ENCODE measurements at regions of chr14 and their contacts with region 1.

Region 1: DNA sequence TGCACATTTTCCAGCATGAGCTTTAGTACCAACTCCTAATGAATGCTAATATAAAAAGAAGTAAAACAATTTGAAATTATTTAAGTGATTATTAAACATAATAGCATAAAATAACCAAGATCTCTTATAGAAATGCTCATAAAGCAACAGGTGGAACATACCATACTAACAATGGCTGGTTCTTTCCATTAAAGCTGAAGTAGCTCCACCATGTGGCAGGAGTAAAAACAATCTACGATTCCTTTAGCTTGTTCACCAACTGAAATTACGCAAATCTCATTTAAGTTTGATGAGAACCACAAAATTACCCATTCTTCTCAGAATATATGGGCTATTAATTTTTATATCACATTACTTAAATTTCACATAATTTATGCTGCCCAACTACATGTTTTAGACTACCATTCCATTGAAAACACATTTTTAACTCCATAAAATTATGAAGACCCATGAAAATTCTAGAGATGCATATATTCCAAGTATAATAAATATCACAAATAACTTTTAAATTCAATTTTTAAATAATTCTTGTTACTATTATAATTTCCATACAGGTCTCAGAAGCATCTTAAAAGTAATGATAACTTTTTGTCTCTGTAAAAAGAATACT is 213.6 kb downstream of the DAD1 start:
- DNase-seq: no peak
- ATAC-seq: no peak
- H3K4me3 ChIP-seq: no peak overlapping the region
- H3K27ac ChIP-seq: no peak overlapping the region
- H3K4me1 ChIP-seq: no peaks in the 10 kb centered on the region
- H3K27me3 ChIP-seq: no peaks in the 10 kb centered on the region
- CTCF ChIP-seq: peak in 4 of 5 experiments; percentile 32 to 47 (median 40)
- POLR2A ChIP-seq: no peak

Region 2: GRCh38 chr14:21894003-21894897 is 481.2 kb before region 1 on chr14:
- in situ Hi-C with region 1: no loop called
- intact Hi-C with region 1: no loop called
- DNase-seq: no peak
- ATAC-seq: no peak
- H3K4me3 ChIP-seq: no peak overlapping the region
- H3K27ac ChIP-seq: no peak overlapping the region
- H3K4me1 ChIP-seq: no peaks in the 10 kb centered on the region
- H3K27me3 ChIP-seq: no peaks in the 10 kb centered on the region
- CTCF ChIP-seq: no peak
- POLR2A ChIP-seq: no peak

Region 3: DNA sequence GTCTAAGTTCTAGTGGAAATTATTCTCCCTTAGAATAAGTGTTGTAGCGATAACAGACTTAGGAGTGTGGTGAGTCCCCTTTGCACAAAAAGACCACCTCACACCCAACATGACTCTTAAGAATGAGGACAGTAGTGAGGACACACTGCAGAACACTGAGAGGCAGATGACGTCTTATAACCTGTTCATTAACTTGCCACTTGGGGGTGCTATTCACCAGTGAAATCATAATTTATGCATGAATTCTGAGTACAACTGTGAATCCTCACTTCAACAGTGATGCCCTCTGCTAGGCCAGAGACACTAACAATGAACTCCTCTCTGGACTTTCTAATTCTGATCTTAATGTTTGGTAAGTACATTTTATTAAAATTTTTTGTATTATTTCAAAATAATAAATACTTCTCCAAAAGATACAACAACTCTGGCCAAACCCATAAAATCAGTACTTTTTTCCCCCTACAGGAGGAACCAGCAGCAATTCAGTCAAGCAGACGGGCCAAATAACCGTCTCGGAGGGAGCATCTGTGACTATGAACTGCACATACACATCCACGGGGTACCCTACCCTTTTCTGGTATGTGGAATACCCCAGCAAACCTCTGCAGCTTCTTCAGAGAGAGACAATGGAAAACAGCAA is 61.1 kb before region 1 on chr14:
- in situ Hi-C with region 1: loop called in 2 of 4 experiments (anchors 5 to 10 kb)
- intact Hi-C with region 1: loop called (anchors 1 kb)
- DNase-seq: no peak
- ATAC-seq: no peak
- H3K4me3 ChIP-seq: no peak overlapping the region
- H3K27ac ChIP-seq: no peak overlapping the region
- H3K4me1 ChIP-seq: no peaks in the 10 kb centered on the region
- H3K27me3 ChIP-seq: no peaks in the 10 kb centered on the region
- CTCF ChIP-seq: peak in 3 of 5 experiments; percentile 31 to 50 (median 43)
- POLR2A ChIP-seq: no peak

Measured in gastrocnemius medialis (tissue), 4 donors.